Mammary epithelial cell (primary cell): ENCODE measurements at regions of chr18 and their contacts with region 1.

Region 1: GRCh38 chr18:71327850-71328249 is 1039.0 kb downstream of the SOCS6 start:
- DNase-seq: no peak
- H3K4me3 ChIP-seq: no peak overlapping the region
- H3K27ac ChIP-seq: no peak overlapping the region
- H3K4me1 ChIP-seq: no peaks in the 10 kb centered on the region
- H3K27me3 ChIP-seq: no peaks in the 10 kb centered on the region
- CTCF ChIP-seq: no peak

Region 2: DNA sequence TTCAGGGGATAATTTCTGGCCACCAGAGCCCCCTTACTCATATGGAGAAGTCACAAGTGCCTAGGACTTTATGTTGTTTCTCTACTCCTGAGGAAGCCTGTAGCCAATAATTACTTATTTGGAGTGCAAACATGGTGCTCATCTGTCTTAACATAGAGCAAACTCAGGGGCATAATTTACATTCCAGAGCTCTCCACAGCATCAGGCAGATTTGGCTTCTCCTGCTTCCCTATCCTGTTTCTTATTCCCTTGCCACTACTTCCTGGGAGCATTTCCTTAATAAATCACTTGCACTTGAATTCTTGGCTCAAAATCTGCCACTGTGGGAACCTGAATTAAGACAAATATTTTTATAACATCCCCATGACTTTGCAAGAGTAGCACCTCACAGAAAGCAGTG is 78.1 kb before region 1 on chr18:
- CTCF ChIA-PET with region 1: no interaction called
- dilution Hi-C with region 1: loop called (anchors 10 kb)
- in situ Hi-C with region 1: no loop called
- intact Hi-C with region 1: no loop called
- DNase-seq: no peak
- H3K4me3 ChIP-seq: no peak overlapping the region
- H3K27ac ChIP-seq: no peak overlapping the region
- H3K4me1 ChIP-seq: no peaks in the 10 kb centered on the region
- H3K27me3 ChIP-seq: no peaks in the 10 kb centered on the region
- CTCF ChIP-seq: no peak